ENCODE measurements at regions of chr2 and their contacts with region 1.

Region 1: DNA sequence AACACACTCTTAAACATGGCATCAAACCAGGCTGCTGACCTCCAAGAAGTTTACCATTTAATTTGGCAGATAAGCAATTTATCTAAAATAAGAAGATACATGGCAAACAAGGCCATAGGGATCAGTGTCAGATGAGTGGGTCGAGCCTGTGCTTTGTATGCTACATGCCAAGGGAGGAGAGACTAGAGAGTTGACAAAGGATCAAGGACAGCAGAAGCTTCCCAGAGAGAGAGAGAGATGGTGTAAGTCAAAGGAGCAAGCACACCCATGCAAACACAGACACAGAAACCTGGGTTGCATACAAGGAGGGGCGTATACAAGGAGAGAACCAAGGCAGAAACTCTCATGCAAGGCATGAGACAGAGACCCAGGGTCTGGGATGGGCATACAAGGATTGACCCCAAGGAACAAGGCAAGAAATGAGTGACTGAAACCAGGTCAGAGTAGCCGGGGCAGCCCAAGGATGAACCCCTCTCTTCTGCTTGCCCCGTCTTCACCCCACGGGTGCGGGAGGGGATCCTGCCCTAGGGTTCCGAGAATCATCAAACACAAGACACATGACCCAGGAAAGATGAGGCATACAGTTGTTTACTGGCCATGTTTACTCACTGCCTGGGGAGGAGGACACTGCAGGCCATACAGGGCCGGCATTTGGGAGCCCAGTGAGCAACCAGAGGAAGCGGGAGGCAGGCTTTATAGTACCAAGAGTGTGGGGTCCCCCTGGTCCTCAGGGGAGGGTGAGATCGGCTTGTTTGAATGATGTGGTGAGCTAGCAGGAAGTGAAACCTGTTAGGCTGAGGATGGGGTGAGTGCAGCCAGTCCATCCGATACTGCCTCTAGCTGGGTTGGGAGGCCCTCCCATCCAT is 529.2 kb upstream of the ID2 start:
- DNase-seq: no peak
- ATAC-seq: no peak

Region 2: DNA sequence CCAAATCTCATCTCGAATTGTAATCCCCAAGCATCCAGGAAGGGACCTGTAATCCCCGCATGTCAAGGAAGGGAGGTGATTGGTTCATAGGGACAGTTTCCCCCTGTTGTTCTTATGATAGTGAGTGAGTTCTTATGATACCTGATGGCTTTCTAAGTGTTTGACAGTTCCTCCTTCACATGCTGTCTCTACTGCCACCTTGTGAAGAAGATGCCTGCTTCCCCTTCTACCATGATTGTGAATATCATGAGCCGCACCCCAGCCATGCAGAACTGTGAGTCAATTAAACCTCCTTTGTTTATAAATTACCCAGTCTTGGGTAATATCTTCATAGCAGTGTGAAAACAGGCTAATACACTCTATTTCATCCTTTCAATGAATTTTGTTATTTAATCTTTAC is 788.7 kb before region 1 on chr2:
- intact Hi-C with region 1: loop called (anchors 5 kb)
- DNase-seq: no peak
- ATAC-seq: no peak

Region 3: GRCh38 chr2:8169443-8169842 is 16.8 kb after region 1 on chr2:
- intact Hi-C with region 1: no loop called
- DNase-seq: no peak
- ATAC-seq: no peak

Region 4: GRCh38 chr2:8298783-8299182 is 146.2 kb after region 1 on chr2:
- intact Hi-C with region 1: no loop called
- DNase-seq: no peak
- ATAC-seq: peak; percentile 75

Region 5: GRCh38 chr2:8678731-8679566 is 526.3 kb after region 1 on chr2:
- intact Hi-C with region 1: no loop called
- DNase-seq: peak; percentile 95
- ATAC-seq: peak; percentile 75

Region 6: GRCh38 chr2:8922431-8922830 is 769.8 kb after region 1 on chr2:
- intact Hi-C with region 1: no loop called
- DNase-seq: no peak
- ATAC-seq: no peak

Measured in sciatic nerve (tissue), 2 donors.